Activated T-helper 2 cell treated with anti-CD3 and anti-CD28 coated beads, Interferon-gamma antibody, Interleukin-2, Interleukin-4, amounts not matched to agents 10 μg/mL and 5 μg/mL and 100 μg/mL, durations not matched to agents 14 hours and 24 hours and 36 hours (primary cell): ENCODE measurements at regions of chr10 and their contacts with region 1.

Region 1: GRCh38 chr10:30783939-30784500 is 154.5 kb upstream of the LYZL2 start:
- DNase-seq: peak; percentile 74
- H3K4me3 Mint-ChIP-seq: peak overlapping the region; percentile 75
- H3K27ac Mint-ChIP-seq: peak overlapping the region; percentile 60
- H3K4me1 Mint-ChIP-seq: peaks cover 31% of the 10 kb centered on the region
- H3K27me3 Mint-ChIP-seq: peaks cover 5% of the 10 kb centered on the region

Region 2: DNA sequence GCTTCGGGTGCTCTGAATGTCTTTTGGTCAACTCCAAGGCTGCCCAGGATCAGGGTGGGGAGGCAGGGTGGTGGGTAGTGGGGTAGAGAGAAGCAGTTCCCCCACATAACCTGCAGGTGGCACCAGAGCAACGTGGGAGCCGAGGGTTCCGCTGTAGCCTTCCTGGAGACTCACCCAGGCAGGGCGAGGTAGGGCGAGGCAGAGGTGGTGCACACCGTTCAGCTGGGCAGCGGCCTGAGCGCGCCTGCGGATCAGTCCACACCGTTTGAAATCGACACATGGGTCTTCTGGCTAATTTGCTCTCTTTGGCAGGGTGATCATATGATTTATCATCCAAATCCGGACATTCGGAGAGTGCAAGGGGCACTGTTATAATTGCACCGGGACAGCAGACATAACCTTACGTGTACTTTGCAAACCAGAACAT is 391.4 kb before region 1 on chr10:
- intact Hi-C with region 1: no loop called
- DNase-seq: peak; percentile 68
- H3K4me3 Mint-ChIP-seq: no peak overlapping the region
- H3K27ac Mint-ChIP-seq: no peak overlapping the region
- H3K4me1 Mint-ChIP-seq: peaks cover 14% of the 10 kb centered on the region
- H3K27me3 Mint-ChIP-seq: peaks cover 22% of the 10 kb centered on the region

Region 3: GRCh38 chr10:31031558-31032257 is 247.7 kb after region 1 on chr10 and contains the start of gene ZNF438:
- intact Hi-C with region 1: loop called (anchors 5 kb)
- DNase-seq: peak; percentile 94
- H3K4me3 Mint-ChIP-seq: peak within 1 kb of the TSS; percentile 86
- H3K27ac Mint-ChIP-seq: peak within 1 kb of the TSS; percentile 98
- H3K4me1 Mint-ChIP-seq: peaks cover 27% of the 10 kb centered on the region
- H3K27me3 Mint-ChIP-seq: no peaks in the 10 kb centered on the region
- total RNA-seq, gene ZNF438: 5.8 and 6.1 TPM in 2 replicates

Region 4: GRCh38 chr10:31133628-31134302 is 349.7 kb after region 1 on chr10:
- intact Hi-C with region 1: loop called (anchors 1 kb)
- DNase-seq: peak; percentile 52
- H3K4me3 Mint-ChIP-seq: peak overlapping the region; percentile 60
- H3K27ac Mint-ChIP-seq: peak overlapping the region; percentile 84
- H3K4me1 Mint-ChIP-seq: peaks cover 45% of the 10 kb centered on the region
- H3K27me3 Mint-ChIP-seq: no peaks in the 10 kb centered on the region

Region 5: GRCh38 chr10:31687663-31688482 is 903.9 kb after region 1 on chr10:
- intact Hi-C with region 1: loop called (anchors 10 kb)
- DNase-seq: no peak
- H3K4me3 Mint-ChIP-seq: no peak overlapping the region
- H3K27ac Mint-ChIP-seq: no peak overlapping the region
- H3K4me1 Mint-ChIP-seq: no peaks in the 10 kb centered on the region
- H3K27me3 Mint-ChIP-seq: no peaks in the 10 kb centered on the region

Region 6: GRCh38 chr10:31808258-31809218 is 1024.5 kb after region 1 on chr10:
- intact Hi-C with region 1: loop called (anchors 1 kb)
- DNase-seq: peak; percentile 11
- H3K4me3 Mint-ChIP-seq: peak overlapping the region; percentile 76
- H3K27ac Mint-ChIP-seq: peak overlapping the region; percentile 84
- H3K4me1 Mint-ChIP-seq: peaks cover 7% of the 10 kb centered on the region
- H3K27me3 Mint-ChIP-seq: no peaks in the 10 kb centered on the region